B cell (primary cell): ENCODE measurements at regions of chr20 and their contacts with region 1.

Region 1: DNA sequence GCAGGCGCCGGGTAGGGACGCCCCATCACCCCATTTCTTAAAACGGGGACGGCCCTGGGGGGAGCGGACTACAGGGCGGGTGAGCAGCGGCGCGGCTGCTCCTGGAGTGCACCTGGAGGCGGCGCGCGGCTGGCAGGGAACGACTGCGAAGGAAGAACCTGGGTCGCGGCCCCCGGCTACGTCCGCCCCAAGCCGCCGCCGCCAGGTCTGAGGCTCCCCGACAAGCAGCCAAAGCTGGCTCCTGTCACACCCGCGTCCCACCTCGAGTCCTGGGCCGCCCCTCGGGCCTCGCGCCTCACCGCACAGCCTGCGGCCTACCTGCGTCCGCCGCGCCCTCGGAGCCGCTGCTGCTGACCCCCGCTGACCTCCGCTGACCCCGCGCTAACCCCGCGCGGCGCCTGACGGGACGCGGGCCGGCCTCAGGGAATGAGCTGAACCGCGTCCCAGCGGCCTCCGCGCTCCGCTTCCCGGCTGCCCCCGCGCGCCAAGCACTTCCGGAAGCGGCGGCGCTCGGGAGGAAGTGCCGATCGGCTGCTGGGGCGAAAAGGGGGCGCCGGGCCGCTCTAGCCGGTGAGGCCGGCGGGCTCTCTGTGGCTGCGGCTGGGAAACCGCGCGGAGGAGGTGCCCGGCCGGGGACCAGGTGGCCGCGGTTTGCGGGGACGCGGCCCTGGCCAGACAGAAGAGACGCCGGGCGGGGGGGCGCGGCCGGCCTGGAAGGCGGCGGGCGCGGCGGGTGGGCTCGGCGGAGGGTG is at the starts of genes ARFRP1 and ZGPAT:
- DNase-seq: peak; percentile 92
- ATAC-seq: peak; percentile 96
- H3K4me3 ChIP-seq: peak within 1 kb of the TSS in 4 of 5 experiments; percentile 63 to 80 (median 67)
- H3K4me3 Mint-ChIP-seq: peak within 1 kb of the TSS; percentile 87
- H3K27ac ChIP-seq: peak within 1 kb of the TSS; percentile 63 to 85
- H3K27ac Mint-ChIP-seq: peak within 1 kb of the TSS; percentile 86
- H3K4me1 ChIP-seq: peaks cover 21 to 28% of the 10 kb centered on the region in 2 donors
- H3K4me1 Mint-ChIP-seq: peaks cover 38% of the 10 kb centered on the region
- H3K27me3 ChIP-seq: no peaks in the 10 kb centered on the region
- H3K27me3 Mint-ChIP-seq: no peaks in the 10 kb centered on the region
- CTCF ChIP-seq: no peak
- total RNA-seq, gene ARFRP1: 73.3 and 75.5 TPM in 2 replicates
- total RNA-seq, gene ZGPAT: 46.1 and 47.5 TPM in 2 replicates

Region 2: GRCh38 chr20:63739130-63740069 is 31.7 kb after region 1 on chr20 and contains the start of gene SLC2A4RG:
- CTCF ChIA-PET with region 1: interaction called, 5 read pairs
- POLR2A ChIA-PET with region 1: interaction called, 20 read pairs
- intact Hi-C with region 1: loop called (anchors 1 kb)
- DNase-seq: peak; percentile 79
- ATAC-seq: peak; percentile 71
- H3K4me3 ChIP-seq: peak within 1 kb of the TSS; percentile 23 to 64 (median 50)
- H3K4me3 Mint-ChIP-seq: peak within 1 kb of the TSS; percentile 80
- H3K27ac ChIP-seq: no peak within 1 kb of the TSS
- H3K27ac Mint-ChIP-seq: no peak within 1 kb of the TSS
- H3K4me1 ChIP-seq: peaks cover 35 to 46% of the 10 kb centered on the region in 2 donors
- H3K4me1 Mint-ChIP-seq: peaks cover 18% of the 10 kb centered on the region
- H3K27me3 ChIP-seq: no peaks in the 10 kb centered on the region
- H3K27me3 Mint-ChIP-seq: no peaks in the 10 kb centered on the region
- CTCF ChIP-seq: no peak
- total RNA-seq, gene SLC2A4RG: 49.4 and 50.8 TPM in 2 replicates